Mucosa of descending colon (tissue), 3 donors: ENCODE measurements at regions of chr9 and their contacts with region 1.

Region 1: DNA sequence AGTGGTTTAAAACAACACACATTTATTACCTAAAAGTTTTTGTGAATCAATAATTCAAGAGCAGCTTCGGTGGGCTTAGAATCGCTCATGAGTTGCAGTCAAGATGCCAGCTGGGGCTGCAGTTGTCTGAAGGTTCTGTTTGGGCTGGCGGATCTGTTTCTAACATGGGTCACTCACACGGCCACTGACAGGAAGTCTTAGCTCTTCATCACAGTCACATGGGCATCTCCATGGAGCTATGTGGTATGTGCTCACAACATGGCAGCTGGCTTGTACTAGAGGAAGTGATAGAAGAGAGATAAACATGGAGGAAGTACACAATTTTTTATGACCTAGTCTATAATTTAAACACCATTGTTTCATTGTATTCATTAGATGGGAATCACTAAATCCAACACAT is 11.2 kb downstream of the KLHL9 start:
- DNase-seq: no peak
- ATAC-seq: peak; percentile 44
- H3K4me3 ChIP-seq: no peak overlapping the region
- H3K4me1 ChIP-seq: no peaks in the 10 kb centered on the region
- CTCF ChIP-seq: no peak

Region 2: GRCh38 chr9:21454149-21454548 is 130.1 kb after region 1 on chr9:
- intact Hi-C with region 1: loop called in 1 of 2 experiments (anchors 5 kb)
- DNase-seq: no peak
- ATAC-seq: peak; percentile 51
- H3K4me3 ChIP-seq: no peak overlapping the region
- H3K4me1 ChIP-seq: no peaks in the 10 kb centered on the region
- CTCF ChIP-seq: no peak